ENCODE measurements at regions of chr4 and their contacts with region 1.

Region 1: GRCh38 chr4:137819964-137820383 is 287.7 kb upstream of the PCDH18 start:
- DNase-seq: peak; percentile 43 to 47
- H3K4me3 ChIP-seq: no peak overlapping the region
- H3K27ac ChIP-seq: no peak overlapping the region
- H3K4me1 ChIP-seq: no peaks in the 10 kb centered on the region
- H3K27me3 ChIP-seq: no peaks in the 10 kb centered on the region
- CTCF ChIP-seq: peak in 2 of 3 experiments; percentile 77 to 84; a peak in 3 of 4 replicates
- EP300 ChIP-seq: no peak
- POLR2A ChIP-seq: no peak
- RAD21 ChIP-seq: peak; percentile 97

Region 2: GRCh38 chr4:137685357-137685756 is 134.6 kb before region 1 on chr4:
- CTCF ChIA-PET with region 1: no interaction called
- POLR2A ChIA-PET with region 1: no interaction called
- DNase-seq: no peak
- H3K4me3 ChIP-seq: no peak overlapping the region
- H3K27ac ChIP-seq: no peak overlapping the region
- H3K4me1 ChIP-seq: peaks cover 0 to 5% (median 3%) of the 10 kb centered on the region in 4 experiments; a peak in 2 of 7 replicates
- H3K27me3 ChIP-seq: no peaks in the 10 kb centered on the region
- CTCF ChIP-seq: no peak
- EP300 ChIP-seq: no peak
- POLR2A ChIP-seq: no peak
- RAD21 ChIP-seq: no peak

Region 3: GRCh38 chr4:137735561-137736104 is 84.3 kb before region 1 on chr4:
- CTCF ChIA-PET with region 1: interaction called, 16 read pairs
- POLR2A ChIA-PET with region 1: no interaction called
- DNase-seq: no peak
- H3K4me3 ChIP-seq: no peak overlapping the region
- H3K27ac ChIP-seq: no peak overlapping the region
- H3K4me1 ChIP-seq: no peaks in the 10 kb centered on the region
- H3K27me3 ChIP-seq: no peaks in the 10 kb centered on the region
- CTCF ChIP-seq: no peak
- EP300 ChIP-seq: no peak
- POLR2A ChIP-seq: no peak
- RAD21 ChIP-seq: no peak

Region 4: DNA sequence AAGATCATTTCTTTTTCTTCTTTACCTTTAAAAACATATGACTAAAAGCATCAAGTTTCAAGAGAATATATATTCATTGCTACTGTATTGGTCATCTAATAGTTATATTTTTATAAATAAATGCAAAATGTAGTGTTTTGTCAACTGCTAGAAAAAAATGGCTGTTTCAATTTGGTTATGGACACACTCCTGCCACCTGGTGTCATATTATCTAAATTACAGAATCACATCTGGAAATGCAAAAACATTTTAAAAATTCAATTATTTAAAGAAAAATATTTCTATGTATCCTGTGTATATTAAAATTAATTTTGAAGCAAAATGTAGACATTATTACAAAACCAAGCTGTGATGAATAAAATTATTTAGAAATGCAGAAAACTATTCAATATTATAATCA is 41.7 kb after region 1 on chr4:
- CTCF ChIA-PET with region 1: interaction called, 17 read pairs
- POLR2A ChIA-PET with region 1: no interaction called
- DNase-seq: no peak
- H3K4me3 ChIP-seq: no peak overlapping the region
- H3K27ac ChIP-seq: no peak overlapping the region
- H3K4me1 ChIP-seq: no peaks in the 10 kb centered on the region
- H3K27me3 ChIP-seq: no peaks in the 10 kb centered on the region
- CTCF ChIP-seq: no peak; a peak in 1 of 4 replicates
- EP300 ChIP-seq: no peak
- POLR2A ChIP-seq: no peak
- RAD21 ChIP-seq: peak; percentile 16 to 34; a peak in 3 of 4 replicates

Region 5: DNA sequence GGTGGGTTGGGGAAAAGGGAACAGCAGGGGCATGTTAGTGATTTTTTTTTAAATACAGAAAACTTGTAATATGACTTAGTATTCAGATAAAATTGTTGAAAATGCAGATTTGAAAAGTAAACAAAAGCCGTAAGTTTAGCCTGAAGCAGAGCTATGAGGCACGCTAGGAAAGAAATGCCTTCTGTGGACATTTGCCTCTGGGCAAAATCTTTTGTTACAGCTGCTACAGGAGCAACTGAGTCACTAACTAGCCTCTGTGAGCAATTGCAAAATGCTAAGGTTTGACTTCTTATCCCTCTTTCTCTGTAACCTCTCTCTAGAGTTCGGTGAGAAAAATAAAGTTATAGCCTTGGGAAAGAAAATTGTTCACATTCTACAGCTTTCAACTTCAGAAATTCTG is 72.2 kb after region 1 on chr4:
- CTCF ChIA-PET with region 1: no interaction called
- POLR2A ChIA-PET with region 1: no interaction called
- DNase-seq: no peak
- H3K4me3 ChIP-seq: no peak overlapping the region
- H3K27ac ChIP-seq: no peak overlapping the region
- H3K4me1 ChIP-seq: no peaks in the 10 kb centered on the region; a peak in 1 of 7 replicates
- H3K27me3 ChIP-seq: no peaks in the 10 kb centered on the region
- CTCF ChIP-seq: no peak
- EP300 ChIP-seq: no peak
- POLR2A ChIP-seq: no peak
- RAD21 ChIP-seq: no peak

Region 6: GRCh38 chr4:137946453-137947174 is 126.6 kb after region 1 on chr4:
- CTCF ChIA-PET with region 1: no interaction called
- POLR2A ChIA-PET with region 1: no interaction called
- DNase-seq: no peak
- H3K4me3 ChIP-seq: no peak overlapping the region
- H3K27ac ChIP-seq: no peak overlapping the region
- H3K4me1 ChIP-seq: no peaks in the 10 kb centered on the region
- H3K27me3 ChIP-seq: no peaks in the 10 kb centered on the region
- CTCF ChIP-seq: no peak
- EP300 ChIP-seq: no peak
- POLR2A ChIP-seq: no peak
- RAD21 ChIP-seq: no peak

Region 7: DNA sequence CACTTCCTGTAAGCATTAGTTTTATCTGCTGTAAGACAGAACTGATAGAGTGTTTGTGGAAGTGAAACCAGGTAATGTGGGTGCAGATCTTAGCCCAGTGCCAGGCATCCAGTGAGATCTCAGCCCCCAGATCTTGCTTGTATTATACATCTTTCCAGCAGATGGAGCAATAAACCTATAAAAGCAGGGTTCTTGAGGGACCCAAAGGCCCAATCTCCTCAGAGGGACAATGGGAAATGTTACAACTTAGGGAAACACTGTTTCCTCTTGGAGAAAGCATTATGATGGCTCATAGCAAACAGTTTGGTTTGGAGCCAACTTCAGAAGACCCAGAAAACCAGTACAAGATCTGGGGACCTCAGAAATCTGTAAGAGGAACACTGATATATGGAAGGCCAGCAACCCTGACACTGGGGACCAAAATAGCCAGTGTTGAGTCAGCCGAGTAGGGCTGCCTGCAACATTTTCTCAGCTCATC is 215.8 kb after region 1 on chr4:
- CTCF ChIA-PET with region 1: interaction called, 22 read pairs
- POLR2A ChIA-PET with region 1: no interaction called
- DNase-seq: no peak
- H3K4me3 ChIP-seq: no peak overlapping the region
- H3K27ac ChIP-seq: no peak overlapping the region
- H3K4me1 ChIP-seq: no peaks in the 10 kb centered on the region
- H3K27me3 ChIP-seq: no peaks in the 10 kb centered on the region
- CTCF ChIP-seq: peak in 2 of 3 experiments; percentile 61 to 77; a peak in 3 of 4 replicates
- EP300 ChIP-seq: no peak
- POLR2A ChIP-seq: no peak
- RAD21 ChIP-seq: peak; percentile 91 to 95

Region 8: DNA sequence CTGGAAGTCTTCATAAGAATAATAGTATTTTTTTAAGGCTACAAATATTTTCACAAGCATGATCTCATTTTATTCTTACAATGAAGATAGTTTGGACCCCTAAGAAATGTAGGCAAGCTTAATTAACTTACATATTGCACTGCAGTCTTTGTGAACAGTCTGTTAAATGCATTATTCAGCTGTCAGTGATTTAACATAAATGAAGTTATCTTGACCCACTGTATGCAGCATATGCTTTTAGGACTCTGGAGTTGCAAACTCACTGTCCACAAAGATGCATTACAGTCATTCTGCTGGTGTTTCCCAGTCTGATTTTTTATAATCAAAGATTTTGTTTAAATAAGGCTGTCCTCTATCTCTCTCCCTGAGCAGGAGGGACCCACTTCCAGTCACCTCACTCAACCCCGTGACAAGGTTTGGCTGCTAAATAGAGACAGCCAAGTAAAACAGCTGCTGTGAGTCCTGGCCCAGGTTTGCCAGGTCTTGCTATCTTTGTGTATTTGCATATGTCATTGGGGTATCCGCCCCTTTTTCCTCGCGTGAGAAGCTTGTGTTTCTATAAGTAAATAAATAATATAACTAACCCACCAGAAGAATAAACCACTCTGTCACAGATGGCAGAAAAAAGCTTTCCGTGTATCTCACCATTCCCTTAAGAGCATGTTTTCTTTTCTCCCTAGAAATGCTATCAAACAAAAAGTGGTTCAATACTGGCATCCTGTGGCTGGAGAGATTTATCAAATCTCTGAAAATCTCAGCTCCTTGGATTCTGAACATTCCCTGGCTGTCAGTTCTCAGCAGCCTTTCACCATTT is 355.2 kb after region 1 on chr4:
- CTCF ChIA-PET with region 1: interaction called, 17 read pairs
- POLR2A ChIA-PET with region 1: no interaction called
- DNase-seq: no peak
- H3K4me3 ChIP-seq: no peak overlapping the region
- H3K27ac ChIP-seq: no peak overlapping the region
- H3K4me1 ChIP-seq: no peaks in the 10 kb centered on the region
- H3K27me3 ChIP-seq: no peaks in the 10 kb centered on the region
- CTCF ChIP-seq: no peak
- EP300 ChIP-seq: no peak
- POLR2A ChIP-seq: no peak
- RAD21 ChIP-seq: peak in 1 of 2 experiments; percentile 32; a peak in 2 of 4 replicates